ENCODE measurements at regions of chr17 and their contacts with region 1.

Region 1: GRCh38 chr17:50853015-50853615 is 13.0 kb downstream of the TOB1 start:
- DNase-seq: no peak
- ATAC-seq: no peak
- H3K4me3 ChIP-seq: no peak overlapping the region
- H3K27ac ChIP-seq: peak overlapping the region; percentile 88 to 95 (median 93)
- H3K4me1 ChIP-seq: peaks cover 25 to 51% of the 10 kb centered on the region in 2 donors
- H3K27me3 ChIP-seq: no peaks in the 10 kb centered on the region
- CTCF ChIP-seq: no peak
- POLR2A ChIP-seq: no peak

Region 2: DNA sequence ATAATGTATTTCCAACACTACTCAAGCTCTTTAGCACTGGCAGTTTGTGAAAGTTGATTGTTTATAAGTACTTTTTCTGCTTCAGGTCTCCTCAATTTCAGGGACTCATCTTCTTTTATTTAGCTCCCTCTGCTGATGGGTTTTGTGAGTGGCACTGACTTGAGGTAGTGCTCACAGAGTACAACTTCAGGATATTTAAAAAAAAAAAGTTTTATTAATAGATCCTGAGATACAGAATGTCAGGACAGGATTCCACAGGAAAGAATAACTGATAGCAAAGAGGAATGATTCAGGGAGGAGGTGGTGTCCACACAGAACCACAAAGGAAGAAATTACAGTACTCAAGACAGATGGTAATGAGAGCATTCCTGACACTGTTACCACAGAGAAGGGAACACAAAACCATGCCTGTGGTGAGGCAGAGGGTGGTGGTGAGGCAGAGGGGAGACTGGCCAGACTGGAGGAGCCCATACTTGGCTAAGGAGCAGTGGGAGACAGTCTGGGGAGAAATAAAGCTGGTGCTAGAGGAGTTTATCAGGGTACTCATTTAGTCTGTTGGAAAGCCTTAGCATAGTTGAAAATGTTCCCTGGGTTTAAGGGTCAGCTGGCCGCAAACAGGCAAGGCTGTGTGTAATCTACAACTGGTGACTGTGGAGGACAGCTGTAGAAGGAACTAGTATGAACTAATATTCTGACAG is 203.8 kb after region 1 on chr17:
- in situ Hi-C with region 1: no loop called
- intact Hi-C with region 1: loop called (anchors 10 kb)
- DNase-seq: peak; percentile 14 to 60
- ATAC-seq: peak; percentile 89 to 96
- H3K4me3 ChIP-seq: no peak overlapping the region
- H3K27ac ChIP-seq: peak overlapping the region; percentile 72 to 78 (median 74)
- H3K4me1 ChIP-seq: peaks cover 34 to 35% of the 10 kb centered on the region in 2 donors
- H3K27me3 ChIP-seq: no peaks in the 10 kb centered on the region
- CTCF ChIP-seq: peak; percentile 16 to 67 (median 51)
- POLR2A ChIP-seq: no peak

Measured in gastrocnemius medialis (tissue), 4 donors.